ENCODE measurements at regions of chr17 and their contacts with region 1.

Region 1: GRCh38 chr17:28644985-28645939 is at the start of gene BLTP2:
- DNase-seq: peak; percentile 96
- H3K4me3 Mint-ChIP-seq: peak within 1 kb of the TSS; percentile 84
- H3K27ac Mint-ChIP-seq: peak within 1 kb of the TSS; percentile 86
- H3K4me1 Mint-ChIP-seq: peaks cover 36% of the 10 kb centered on the region
- H3K27me3 Mint-ChIP-seq: no peaks in the 10 kb centered on the region
- total RNA-seq, gene BLTP2: 89.4 to 92.0 TPM

Region 2: DNA sequence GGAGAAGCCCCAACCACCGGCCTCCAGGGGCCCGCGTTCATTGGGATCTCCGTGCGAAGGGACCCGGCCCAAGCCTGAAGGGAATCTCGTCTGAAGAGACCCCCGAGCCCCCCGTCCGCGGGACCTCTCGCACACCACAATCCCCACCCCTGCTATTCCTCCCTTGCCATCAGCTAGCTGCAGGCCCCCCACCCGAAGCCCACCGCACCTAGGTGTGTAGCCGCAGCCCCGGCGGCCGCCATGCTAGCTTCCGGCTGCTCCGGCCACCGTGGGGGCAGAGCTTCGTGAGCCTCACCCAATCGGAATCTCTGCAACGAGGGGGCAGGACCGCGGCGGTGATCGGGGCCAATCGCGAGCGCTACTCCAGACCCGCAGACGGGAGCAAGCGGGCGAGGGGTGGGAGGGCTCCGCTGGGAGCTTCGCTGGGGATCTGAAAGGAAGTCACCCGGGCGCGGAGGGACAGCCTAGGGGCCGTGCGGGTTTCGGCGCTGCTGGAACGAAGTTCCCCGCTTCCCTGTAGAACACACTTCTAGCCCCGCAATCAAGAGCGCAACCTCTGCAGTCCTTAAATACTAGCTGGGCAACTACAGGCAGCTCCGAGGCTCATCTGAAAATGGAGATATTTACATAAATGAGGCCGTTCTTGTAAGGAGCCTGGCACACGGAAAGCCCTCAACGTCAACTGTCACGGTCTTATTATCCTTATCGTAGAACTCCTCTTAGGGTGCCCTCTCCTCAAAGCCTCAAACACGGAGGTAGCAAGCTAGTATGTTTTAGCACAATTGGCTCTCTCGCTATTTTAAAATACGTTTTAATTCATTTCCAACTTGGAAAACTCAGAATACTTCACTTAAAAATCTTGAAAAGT is 73.8 kb before region 1 on chr17 and contains the start of gene PIGS:
- CTCF ChIA-PET with region 1: interaction called, 3 read pairs
- intact Hi-C with region 1: loop called (anchors 2 kb)
- DNase-seq: peak; percentile 96
- H3K4me3 Mint-ChIP-seq: peak within 1 kb of the TSS; percentile 85
- H3K27ac Mint-ChIP-seq: peak within 1 kb of the TSS; percentile 91
- H3K4me1 Mint-ChIP-seq: peaks cover 50% of the 10 kb centered on the region
- H3K27me3 Mint-ChIP-seq: no peaks in the 10 kb centered on the region
- total RNA-seq, gene PIGS: 34.8 to 36.0 TPM

Region 3: DNA sequence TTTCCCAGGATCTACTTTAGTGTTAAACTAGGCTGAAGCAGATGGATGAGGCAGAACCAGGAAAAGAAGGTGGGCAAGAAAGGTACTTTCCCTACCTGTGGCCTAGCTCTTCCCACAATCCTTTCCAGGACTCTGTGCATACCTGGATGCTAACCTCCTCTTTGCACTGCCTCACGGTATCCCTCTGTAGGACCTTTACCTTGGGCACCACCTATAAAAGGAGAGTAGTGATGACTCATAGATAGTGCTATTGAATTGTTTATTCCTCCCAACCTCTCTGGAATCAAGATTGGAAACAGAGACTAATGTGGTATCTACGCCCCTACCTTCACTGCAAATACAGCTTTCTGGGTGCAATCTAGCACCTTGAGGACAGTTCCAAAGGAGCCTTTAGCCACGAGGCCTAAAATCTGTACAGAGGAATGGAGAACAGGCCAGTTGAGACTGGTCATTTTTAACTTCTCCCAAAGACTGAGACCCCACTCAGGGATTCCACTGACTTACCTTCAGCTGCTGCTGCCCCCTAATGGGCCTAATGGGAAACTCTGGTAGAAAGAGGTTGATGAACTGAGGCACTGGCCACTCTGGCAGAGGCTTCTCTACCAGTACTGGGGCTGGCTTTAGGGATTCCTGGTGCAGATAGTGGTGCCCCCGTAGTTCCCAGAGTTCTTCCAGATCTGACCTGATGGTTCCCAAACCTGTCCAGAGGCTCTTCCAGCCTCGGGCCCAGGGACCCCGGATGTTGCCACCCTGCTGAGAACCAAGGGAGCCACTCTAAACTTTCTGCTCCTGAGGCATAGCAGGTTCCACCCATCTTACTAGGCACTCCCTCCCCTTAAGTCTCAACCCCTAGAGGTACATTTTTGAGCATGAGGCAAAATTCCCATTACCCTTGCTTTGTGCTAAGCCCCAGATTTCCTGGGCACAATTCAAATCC is 32.1 kb before region 1 on chr17:
- CTCF ChIA-PET with region 1: interaction called, 10 read pairs
- intact Hi-C with region 1: no loop called
- DNase-seq: peak; percentile 52
- H3K4me3 Mint-ChIP-seq: no peak overlapping the region
- H3K27ac Mint-ChIP-seq: no peak overlapping the region
- H3K4me1 Mint-ChIP-seq: peaks cover 3% of the 10 kb centered on the region
- H3K27me3 Mint-ChIP-seq: no peaks in the 10 kb centered on the region

Region 4: GRCh38 chr17:28675980-28676379 is 30.7 kb after region 1 on chr17:
- CTCF ChIA-PET with region 1: interaction called, 22 read pairs
- intact Hi-C with region 1: loop called (anchors 1 kb)
- DNase-seq: peak; percentile 13
- H3K4me3 Mint-ChIP-seq: no peak overlapping the region
- H3K27ac Mint-ChIP-seq: no peak overlapping the region
- H3K4me1 Mint-ChIP-seq: no peaks in the 10 kb centered on the region
- H3K27me3 Mint-ChIP-seq: no peaks in the 10 kb centered on the region

Region 5: GRCh38 chr17:28717578-28718333 is 72.5 kb after region 1 on chr17 and contains the start of gene RAB34:
- CTCF ChIA-PET with region 1: interaction called, 5 read pairs
- intact Hi-C with region 1: loop called (anchors 2 kb)
- DNase-seq: peak; percentile 22
- H3K4me3 Mint-ChIP-seq: peak within 1 kb of the TSS; percentile 66
- H3K27ac Mint-ChIP-seq: peak within 1 kb of the TSS; percentile 59
- H3K4me1 Mint-ChIP-seq: peaks cover 33% of the 10 kb centered on the region
- H3K27me3 Mint-ChIP-seq: peaks cover 25% of the 10 kb centered on the region
- total RNA-seq, gene RAB34: 10.2 to 12.3 TPM

Region 6: GRCh38 chr17:28902819-28903545 is 257.7 kb after region 1 on chr17 and contains the start of gene DHRS13:
- CTCF ChIA-PET with region 1: interaction called, 3 read pairs
- intact Hi-C with region 1: loop called (anchors 5 kb)
- DNase-seq: peak; percentile 93
- H3K4me3 Mint-ChIP-seq: peak within 1 kb of the TSS; percentile 98
- H3K27ac Mint-ChIP-seq: peak within 1 kb of the TSS; percentile 88
- H3K4me1 Mint-ChIP-seq: peaks cover 35% of the 10 kb centered on the region
- H3K27me3 Mint-ChIP-seq: no peaks in the 10 kb centered on the region
- total RNA-seq, gene DHRS13: 20.1 to 20.9 TPM

Measured in activated naive CD4-positive, alpha-beta T cell treated with anti-CD3 and anti-CD28 coated beads for 36 hours (primary cell).